Thyroid gland (tissue), 4 donors: ENCODE measurements at regions of chr20 and their contacts with region 1.

Region 1: DNA sequence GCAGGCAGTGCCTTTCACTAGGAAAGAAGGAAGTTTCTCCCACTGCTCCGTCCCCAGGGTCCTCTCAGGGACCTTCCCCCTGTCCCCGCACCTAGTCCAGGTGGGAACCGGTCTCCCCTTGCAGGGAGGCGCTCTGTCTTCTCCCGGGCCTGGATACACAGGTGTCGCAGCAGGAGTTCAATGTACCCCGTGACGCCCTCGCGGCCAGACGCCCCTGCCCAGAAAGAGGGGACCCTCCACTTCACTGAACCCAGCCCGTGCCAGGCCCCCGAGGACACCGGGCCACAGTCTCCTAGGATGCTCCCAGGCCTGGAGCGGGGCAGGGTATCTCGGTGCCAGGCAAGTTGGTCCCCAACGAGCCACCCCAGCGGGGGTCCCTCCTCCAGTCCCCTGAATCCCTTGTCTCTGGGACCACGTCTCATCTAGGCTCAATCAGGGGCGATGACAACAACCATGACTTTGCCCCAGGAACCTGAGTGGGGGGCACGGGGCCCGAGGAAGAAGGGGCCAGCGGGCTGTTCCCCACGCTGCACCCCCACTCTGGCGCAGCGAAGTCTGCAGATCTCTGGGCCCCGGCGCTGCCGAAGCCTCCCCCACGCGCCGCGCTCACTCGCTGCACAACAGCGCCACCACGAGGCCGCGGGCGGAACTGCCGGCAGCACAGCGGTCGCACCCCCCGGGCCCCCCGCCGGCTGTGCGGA is 103.0 kb downstream of the EDN3 start:
- DNase-seq: peak; percentile 70 to 74
- H3K4me3 ChIP-seq: peak overlapping the region in 1 of 3 donors; percentile 7
- H3K27ac ChIP-seq: peak overlapping the region; percentile 12 to 90 (median 66)
- H3K4me1 ChIP-seq: peaks cover 19 to 32% of the 10 kb centered on the region in 2 donors
- H3K27me3 ChIP-seq: no peaks in the 10 kb centered on the region
- CTCF ChIP-seq: peak; percentile 92 to 100 (median 99)
- POLR2A ChIP-seq: no peak

Region 2: GRCh38 chr20:59087829-59088433 is 315.5 kb before region 1 on chr20:
- intact Hi-C with region 1: loop called (anchors 5 kb)
- DNase-seq: peak; percentile 86 to 88
- H3K4me3 ChIP-seq: no peak overlapping the region
- H3K27ac ChIP-seq: no peak overlapping the region
- H3K4me1 ChIP-seq: peaks cover 17 to 18% of the 10 kb centered on the region in 2 donors
- H3K27me3 ChIP-seq: no peaks in the 10 kb centered on the region
- CTCF ChIP-seq: peak; percentile 78 to 87 (median 83)
- POLR2A ChIP-seq: no peak

Region 3: GRCh38 chr20:59222253-59223181 is 180.9 kb before region 1 on chr20:
- intact Hi-C with region 1: loop called (anchors 10 kb)
- DNase-seq: peak; percentile 80 to 82
- H3K4me3 ChIP-seq: peak overlapping the region in 1 of 3 donors; percentile 40
- H3K27ac ChIP-seq: peak overlapping the region; percentile 4 to 84 (median 37)
- H3K4me1 ChIP-seq: peaks cover 24 to 26% of the 10 kb centered on the region in 2 donors
- H3K27me3 ChIP-seq: no peaks in the 10 kb centered on the region
- CTCF ChIP-seq: peak; percentile 73 to 96 (median 90)
- POLR2A ChIP-seq: no peak

Region 4: DNA sequence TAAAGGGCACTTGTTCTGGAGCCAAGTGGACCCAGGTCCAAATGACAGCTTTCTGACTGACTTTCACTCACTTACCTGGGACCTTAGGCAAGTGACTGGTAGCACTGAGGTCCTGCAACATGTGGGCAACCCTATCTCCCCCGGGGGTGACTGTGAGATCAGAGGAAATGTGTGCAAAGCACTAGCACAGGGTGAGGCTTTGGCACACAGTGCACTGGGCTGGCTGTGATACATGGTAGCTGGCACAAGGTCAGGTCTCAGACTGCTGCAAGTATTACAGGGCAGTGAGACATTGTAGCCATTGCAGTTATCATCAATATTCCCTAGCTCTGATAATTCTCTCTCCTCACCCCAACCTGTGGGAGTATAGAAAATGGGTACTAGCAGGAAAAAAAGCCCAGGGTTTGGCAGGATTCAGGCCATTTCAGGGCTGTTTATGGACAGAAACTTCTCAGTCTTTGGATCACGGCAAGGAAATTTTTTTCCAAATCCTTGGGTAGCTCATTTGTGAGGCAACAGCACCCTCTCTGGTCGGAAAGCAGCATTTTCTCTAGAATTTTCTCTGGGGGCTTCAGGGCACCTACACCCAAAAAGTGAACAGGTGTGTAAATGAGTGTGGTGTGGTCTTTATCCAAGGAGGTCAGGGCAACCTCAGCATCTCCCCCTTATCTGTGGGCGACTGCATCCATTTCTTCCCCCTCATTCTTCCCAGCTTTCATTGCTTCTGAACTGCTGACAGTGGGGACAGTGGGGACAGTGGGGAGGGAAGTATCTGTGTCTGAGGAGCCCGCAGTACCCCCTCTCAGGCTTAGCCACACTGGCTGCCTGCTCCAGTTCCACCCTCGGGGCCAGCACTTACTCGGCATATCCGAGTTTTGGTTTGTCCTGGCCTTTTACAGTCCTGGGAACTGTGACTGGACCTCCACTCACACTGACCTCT is 52.3 kb after region 1 on chr20:
- intact Hi-C with region 1: loop called (anchors 10 kb)
- DNase-seq: peak; percentile 53 to 65
- H3K4me3 ChIP-seq: no peak overlapping the region
- H3K27ac ChIP-seq: peak overlapping the region in 1 of 3 donors; percentile 19
- H3K4me1 ChIP-seq: peaks cover 0 to 5% of the 10 kb centered on the region in 2 donors
- H3K27me3 ChIP-seq: no peaks in the 10 kb centered on the region
- CTCF ChIP-seq: peak in 5 of 6 experiments; percentile 54 to 80 (median 70)
- POLR2A ChIP-seq: no peak